A673 (cell line): ENCODE measurements at regions of chr7 and their contacts with region 1.

Region 1: GRCh38 chr7:76020031-76020714 is 25.8 kb upstream of the TMEM120A start:
- DNase-seq: peak; percentile 71
- H3K4me3 ChIP-seq: no peak overlapping the region
- H3K27ac ChIP-seq: no peak overlapping the region
- H3K4me1 ChIP-seq: no peaks in the 10 kb centered on the region
- H3K27me3 ChIP-seq: no peaks in the 10 kb centered on the region
- CTCF ChIP-seq: peak; percentile 93

Region 2: GRCh38 chr7:75866489-75867389 is 153.4 kb before region 1 on chr7:
- CTCF ChIA-PET with region 1: interaction called, 14 read pairs
- POLR2A ChIA-PET with region 1: no interaction called
- intact Hi-C with region 1: loop called (anchors 2 kb)
- DNase-seq: peak; percentile 56
- H3K4me3 ChIP-seq: no peak overlapping the region
- H3K27ac ChIP-seq: no peak overlapping the region
- H3K4me1 ChIP-seq: peaks cover 4% of the 10 kb centered on the region
- H3K27me3 ChIP-seq: no peaks in the 10 kb centered on the region
- CTCF ChIP-seq: peak; percentile 81

Region 3: GRCh38 chr7:75971961-75972763 is 48.0 kb before region 1 on chr7:
- CTCF ChIA-PET with region 1: no interaction called
- POLR2A ChIA-PET with region 1: no interaction called
- intact Hi-C with region 1: no loop called
- DNase-seq: peak; percentile 39
- H3K4me3 ChIP-seq: no peak overlapping the region
- H3K27ac ChIP-seq: no peak overlapping the region
- H3K4me1 ChIP-seq: no peaks in the 10 kb centered on the region
- H3K27me3 ChIP-seq: no peaks in the 10 kb centered on the region
- CTCF ChIP-seq: 0 out of 2 replicates have a peak, but pooled peaks have one; percentile 13

Region 4: DNA sequence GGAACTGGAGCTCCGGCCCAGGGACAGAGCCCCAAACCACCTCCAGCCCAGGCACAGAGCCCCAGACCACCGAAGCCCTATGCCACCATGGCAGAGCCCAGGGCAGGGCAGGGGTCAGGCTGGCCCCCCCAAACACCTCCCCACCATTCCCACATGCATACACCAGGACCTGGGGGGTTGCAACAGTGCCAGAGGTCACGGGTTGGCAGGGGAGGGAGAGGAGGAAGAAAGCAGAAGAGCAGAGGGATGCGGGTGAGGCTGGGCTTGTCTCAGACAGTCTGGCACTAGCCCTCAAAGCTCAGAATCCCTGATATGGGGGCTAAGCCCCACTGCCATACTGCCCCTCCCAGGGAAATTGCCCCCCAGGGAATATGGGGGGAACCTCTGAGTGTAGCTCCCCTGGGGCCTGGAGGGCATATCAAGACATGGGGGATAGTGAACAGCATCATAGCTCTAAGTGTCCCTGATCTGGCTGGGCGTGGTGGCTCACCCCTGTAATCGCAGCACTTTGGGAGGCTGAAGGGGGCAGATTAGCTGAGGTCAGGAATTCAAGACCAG is 287.4 kb after region 1 on chr7:
- CTCF ChIA-PET with region 1: no interaction called
- POLR2A ChIA-PET with region 1: no interaction called
- intact Hi-C with region 1: no loop called
- DNase-seq: no peak
- H3K4me3 ChIP-seq: no peak overlapping the region
- H3K27ac ChIP-seq: no peak overlapping the region
- H3K4me1 ChIP-seq: peaks cover 14% of the 10 kb centered on the region
- H3K27me3 ChIP-seq: no peaks in the 10 kb centered on the region
- CTCF ChIP-seq: no peak

Region 5: GRCh38 chr7:77538338-77539212 is 1518.4 kb after region 1 on chr7:
- CTCF ChIA-PET with region 1: no interaction called
- POLR2A ChIA-PET with region 1: no interaction called
- intact Hi-C with region 1: no loop called
- DNase-seq: peak; percentile 88
- H3K4me3 ChIP-seq: peak overlapping the region; percentile 82
- H3K27ac ChIP-seq: peak overlapping the region; percentile 84
- H3K4me1 ChIP-seq: peaks cover 3% of the 10 kb centered on the region
- H3K27me3 ChIP-seq: no peaks in the 10 kb centered on the region
- CTCF ChIP-seq: no peak